Activated CD4-positive, alpha-beta memory T cell treated with anti-CD3 and anti-CD28 coated beads, Interleukin-2, amount 10 ng/mL, durations not matched to agents 7 days and 5 days (primary cell): ENCODE measurements at regions of chr1 and their contacts with region 1.

Region 1: DNA sequence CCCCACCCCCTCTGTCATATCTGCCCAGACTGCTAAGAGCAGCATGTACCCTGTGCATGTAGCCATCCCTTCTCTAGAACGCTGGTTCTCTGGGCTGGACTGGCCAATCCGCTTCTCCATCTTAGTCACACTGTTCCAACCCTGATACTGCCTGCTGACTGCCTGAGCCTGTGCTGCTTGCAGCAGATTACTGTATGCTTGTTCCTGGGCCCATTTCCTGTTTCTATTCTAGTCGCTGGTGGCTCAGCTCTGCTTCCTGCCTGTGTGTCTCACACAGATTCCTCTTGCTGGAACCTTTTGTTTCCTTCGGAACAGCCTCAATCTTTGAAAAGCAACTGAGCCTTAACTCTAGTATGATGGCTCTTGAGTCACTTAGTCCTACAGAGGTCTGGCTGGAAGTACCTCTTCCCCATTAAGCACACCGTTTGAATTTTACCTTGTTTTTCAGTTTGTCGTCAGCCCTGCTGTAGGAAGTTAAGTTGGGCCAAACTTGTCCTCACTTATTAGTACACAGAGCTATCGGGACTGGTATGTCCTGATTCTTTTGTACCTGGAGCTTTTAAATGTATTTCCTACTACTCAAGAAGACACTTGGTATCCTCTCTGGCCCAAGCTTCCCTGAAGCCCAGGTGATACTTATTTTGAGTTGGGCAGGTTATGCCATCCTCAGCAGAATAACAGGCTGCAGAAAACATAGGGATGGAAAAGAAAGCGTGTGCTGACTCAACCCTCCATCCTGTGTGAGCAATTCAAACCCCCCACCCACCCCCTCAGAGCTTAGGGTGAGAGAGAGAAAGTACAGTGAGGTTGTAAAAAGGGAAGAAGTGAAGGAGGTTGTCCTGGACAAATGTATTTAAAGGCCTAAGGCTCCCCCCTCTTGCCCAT is 43.4 kb upstream of the PIGV start:
- DNase-seq: peak; percentile 90
- H3K4me3 Mint-ChIP-seq: peak overlapping the region; percentile 51
- H3K27ac Mint-ChIP-seq: peak overlapping the region; percentile 91
- H3K4me1 Mint-ChIP-seq: peaks cover 77% of the 10 kb centered on the region
- H3K27me3 Mint-ChIP-seq: no peaks in the 10 kb centered on the region

Region 2: DNA sequence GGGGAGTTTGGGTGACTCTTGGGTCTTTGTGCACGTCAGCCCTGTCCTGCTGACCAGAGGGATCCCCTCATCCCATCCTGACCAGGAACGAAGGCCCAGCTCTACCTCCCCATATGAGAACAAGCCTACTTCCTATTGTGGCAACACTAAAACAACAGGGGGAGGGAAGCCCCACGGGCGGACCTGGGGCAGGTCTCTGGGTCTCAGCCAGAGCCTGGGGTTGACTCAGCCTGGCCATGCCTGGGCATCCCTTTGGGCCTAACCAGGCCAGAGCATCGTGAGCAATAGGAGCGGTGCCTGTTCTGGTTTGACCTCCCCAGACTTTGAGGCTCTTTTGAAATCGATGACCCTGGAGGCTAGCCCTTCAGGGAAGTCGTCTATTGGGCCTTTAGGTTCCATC is 197.9 kb before region 1 on chr1:
- CTCF ChIA-PET with region 1: no interaction called
- POLR2A ChIA-PET with region 1: no interaction called
- DNase-seq: no peak
- H3K4me3 Mint-ChIP-seq: peak overlapping the region; percentile 92
- H3K27ac Mint-ChIP-seq: peak overlapping the region; percentile 89
- H3K4me1 Mint-ChIP-seq: peaks cover 78% of the 10 kb centered on the region
- H3K27me3 Mint-ChIP-seq: no peaks in the 10 kb centered on the region

Region 3: GRCh38 chr1:26700711-26701110 is 43.6 kb before region 1 on chr1:
- CTCF ChIA-PET with region 1: interaction called, 10 read pairs
- POLR2A ChIA-PET with region 1: interaction called, 204 read pairs
- DNase-seq: no peak
- H3K4me3 Mint-ChIP-seq: peak overlapping the region; percentile 39
- H3K27ac Mint-ChIP-seq: no peak overlapping the region
- H3K4me1 Mint-ChIP-seq: peaks cover 10% of the 10 kb centered on the region
- H3K27me3 Mint-ChIP-seq: no peaks in the 10 kb centered on the region

Region 4: GRCh38 chr1:26723013-26723991 is 21.0 kb before region 1 on chr1:
- CTCF ChIA-PET with region 1: interaction called, 5 read pairs
- POLR2A ChIA-PET with region 1: interaction called, 47 read pairs
- DNase-seq: peak; percentile 38
- H3K4me3 Mint-ChIP-seq: no peak overlapping the region
- H3K27ac Mint-ChIP-seq: peak overlapping the region; percentile 12
- H3K4me1 Mint-ChIP-seq: peaks cover 78% of the 10 kb centered on the region
- H3K27me3 Mint-ChIP-seq: no peaks in the 10 kb centered on the region

Region 5: DNA sequence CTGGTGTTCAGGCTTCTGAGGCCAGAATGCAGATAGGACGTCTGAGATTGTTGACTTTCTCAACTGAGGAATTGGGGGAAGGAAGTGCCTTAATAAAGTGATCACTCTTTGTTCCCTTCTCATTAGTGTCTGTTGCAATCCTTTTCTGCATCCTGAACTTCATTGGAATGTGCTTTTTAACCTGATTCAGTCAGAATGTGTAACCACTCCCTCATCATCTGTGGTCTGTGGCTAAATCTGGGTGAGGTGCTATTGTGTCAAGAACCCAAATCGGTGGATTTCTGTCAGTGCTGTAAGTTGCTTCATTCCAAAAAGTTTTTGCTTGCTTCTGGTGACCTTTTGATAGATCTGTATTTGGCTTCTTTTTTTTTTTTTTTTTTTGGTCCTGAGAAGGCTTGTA is 10.3 kb before region 1 on chr1:
- CTCF ChIA-PET with region 1: interaction called, 4 read pairs
- POLR2A ChIA-PET with region 1: interaction called, 47 read pairs
- DNase-seq: peak; percentile 52
- H3K4me3 Mint-ChIP-seq: no peak overlapping the region
- H3K27ac Mint-ChIP-seq: peak overlapping the region; percentile 50
- H3K4me1 Mint-ChIP-seq: peaks cover 53% of the 10 kb centered on the region
- H3K27me3 Mint-ChIP-seq: no peaks in the 10 kb centered on the region

Region 6: GRCh38 chr1:26839339-26839722 is 95.0 kb after region 1 on chr1:
- CTCF ChIA-PET with region 1: no interaction called
- POLR2A ChIA-PET with region 1: no interaction called
- DNase-seq: no peak
- H3K4me3 Mint-ChIP-seq: no peak overlapping the region
- H3K27ac Mint-ChIP-seq: peak overlapping the region; percentile 84
- H3K4me1 Mint-ChIP-seq: peaks cover 39% of the 10 kb centered on the region
- H3K27me3 Mint-ChIP-seq: no peaks in the 10 kb centered on the region

Region 7: GRCh38 chr1:26970810-26971209 is 226.5 kb after region 1 on chr1:
- CTCF ChIA-PET with region 1: no interaction called
- POLR2A ChIA-PET with region 1: no interaction called
- DNase-seq: no peak
- H3K4me3 Mint-ChIP-seq: no peak overlapping the region
- H3K27ac Mint-ChIP-seq: no peak overlapping the region
- H3K4me1 Mint-ChIP-seq: peaks cover 7% of the 10 kb centered on the region
- H3K27me3 Mint-ChIP-seq: peaks cover 6% of the 10 kb centered on the region

Region 8: GRCh38 chr1:27392096-27392777 is 647.9 kb after region 1 on chr1 and contains the start of gene GPR3:
- CTCF ChIA-PET with region 1: no interaction called
- POLR2A ChIA-PET with region 1: no interaction called
- DNase-seq: peak; percentile 95
- H3K4me3 Mint-ChIP-seq: peak within 1 kb of the TSS; percentile 74
- H3K27ac Mint-ChIP-seq: peak within 1 kb of the TSS; percentile 54
- H3K4me1 Mint-ChIP-seq: peaks cover 25% of the 10 kb centered on the region
- H3K27me3 Mint-ChIP-seq: peaks cover 3% of the 10 kb centered on the region
- total RNA-seq, gene GPR3: 0.58 to 0.65 TPM